ENCODE measurements at regions of chr17 and their contacts with region 1.

Region 1: GRCh38 chr17:19004421-19005136 is at the start of gene FAM83G:
- DNase-seq: peak; percentile 69
- ATAC-seq: peak; percentile 44
- H3K4me3 ChIP-seq: peak within 1 kb of the TSS; percentile 75 to 84 (median 77)
- H3K27ac ChIP-seq: peak within 1 kb of the TSS; percentile 93
- H3K4me1 ChIP-seq: peaks cover 68% of the 10 kb centered on the region
- H3K27me3 ChIP-seq: no peaks in the 10 kb centered on the region; a peak in 1 of 5 replicates
- CTCF ChIP-seq: 0 out of 2 replicates have a peak, but pooled peaks have one; percentile 10
- EP300 ChIP-seq: no peak
- POLR2A ChIP-seq: peak; percentile 5 to 67; a peak in 2 of 4 replicates
- RAD21 ChIP-seq: no peak
- total RNA-seq, gene FAM83G: 14.0 and 18.6 TPM in 2 replicates

Region 2: GRCh38 chr17:18966831-18967624 is 37.6 kb before region 1 on chr17:
- CTCF ChIA-PET with region 1: no interaction called
- POLR2A ChIA-PET with region 1: interaction called, 5 read pairs
- in situ Hi-C with region 1: loop called (anchors 5 kb)
- intact Hi-C with region 1: no loop called
- DNase-seq: no peak
- ATAC-seq: peak; percentile 18
- H3K4me3 ChIP-seq: no peak overlapping the region
- H3K27ac ChIP-seq: no peak overlapping the region
- H3K4me1 ChIP-seq: peaks cover 60% of the 10 kb centered on the region
- H3K27me3 ChIP-seq: 0 out of 5 replicates have a peak, but pooled peaks cover 0 to 8% of the 10 kb centered on the region in 2 experiments
- CTCF ChIP-seq: no peak
- EP300 ChIP-seq: no peak
- POLR2A ChIP-seq: no peak
- RAD21 ChIP-seq: no peak

Region 3: DNA sequence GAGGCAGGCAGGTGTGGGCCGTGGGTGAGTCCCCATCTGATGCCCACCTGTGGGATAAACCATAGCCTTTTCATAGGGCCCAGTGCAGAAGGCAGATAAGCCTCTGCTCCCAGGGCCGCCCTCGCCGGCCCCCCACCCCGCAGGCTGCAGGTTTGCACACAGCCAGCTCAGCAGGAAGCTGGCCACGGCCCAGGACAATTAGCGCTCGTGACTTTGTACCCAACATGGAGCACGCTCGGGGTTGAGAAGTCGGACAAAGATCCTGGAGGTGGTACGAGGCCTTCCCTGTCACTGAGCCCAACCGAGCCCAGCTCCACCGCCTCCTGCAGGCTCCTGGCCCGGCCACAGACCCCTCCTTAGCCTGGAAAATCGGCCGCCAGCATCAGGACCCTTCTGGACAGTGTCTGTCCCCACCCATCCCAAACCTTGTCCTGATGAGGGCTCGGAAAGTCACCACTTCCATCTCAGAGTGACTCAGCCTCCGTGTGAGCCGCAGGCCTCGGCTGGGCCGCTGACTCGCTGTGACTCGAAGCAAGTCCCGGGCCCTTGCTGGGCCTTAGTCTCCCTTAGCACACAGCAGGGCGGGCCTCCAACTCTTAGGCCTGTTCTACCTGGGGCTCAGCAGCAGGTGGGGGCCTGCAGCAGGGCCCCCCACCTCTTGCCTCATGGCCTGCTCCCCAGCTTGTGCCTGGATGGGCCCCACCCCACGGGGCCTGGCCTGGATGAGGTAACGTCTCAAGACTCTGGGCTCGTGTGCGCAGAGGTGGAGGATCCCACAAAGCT is 22.7 kb before region 1 on chr17:
- CTCF ChIA-PET with region 1: no interaction called
- POLR2A ChIA-PET with region 1: interaction called, 22 read pairs
- in situ Hi-C with region 1: no loop called
- intact Hi-C with region 1: no loop called
- DNase-seq: peak; percentile 87
- ATAC-seq: peak; percentile 84
- H3K4me3 ChIP-seq: peak overlapping the region in 1 of 3 experiments; percentile 42; a peak in 1 of 6 replicates
- H3K27ac ChIP-seq: peak overlapping the region; percentile 88
- H3K4me1 ChIP-seq: peaks cover 51% of the 10 kb centered on the region
- H3K27me3 ChIP-seq: no peaks in the 10 kb centered on the region
- CTCF ChIP-seq: peak; percentile 5; the same call in 1 of the 2 replicates
- EP300 ChIP-seq: peak in 1 of 2 experiments; percentile 51; a peak in 2 of 4 replicates
- POLR2A ChIP-seq: peak in 1 of 2 experiments; percentile 64; a peak in 3 of 4 replicates
- RAD21 ChIP-seq: peak; percentile 33; the same call in 1 of the 2 replicates

Region 4: DNA sequence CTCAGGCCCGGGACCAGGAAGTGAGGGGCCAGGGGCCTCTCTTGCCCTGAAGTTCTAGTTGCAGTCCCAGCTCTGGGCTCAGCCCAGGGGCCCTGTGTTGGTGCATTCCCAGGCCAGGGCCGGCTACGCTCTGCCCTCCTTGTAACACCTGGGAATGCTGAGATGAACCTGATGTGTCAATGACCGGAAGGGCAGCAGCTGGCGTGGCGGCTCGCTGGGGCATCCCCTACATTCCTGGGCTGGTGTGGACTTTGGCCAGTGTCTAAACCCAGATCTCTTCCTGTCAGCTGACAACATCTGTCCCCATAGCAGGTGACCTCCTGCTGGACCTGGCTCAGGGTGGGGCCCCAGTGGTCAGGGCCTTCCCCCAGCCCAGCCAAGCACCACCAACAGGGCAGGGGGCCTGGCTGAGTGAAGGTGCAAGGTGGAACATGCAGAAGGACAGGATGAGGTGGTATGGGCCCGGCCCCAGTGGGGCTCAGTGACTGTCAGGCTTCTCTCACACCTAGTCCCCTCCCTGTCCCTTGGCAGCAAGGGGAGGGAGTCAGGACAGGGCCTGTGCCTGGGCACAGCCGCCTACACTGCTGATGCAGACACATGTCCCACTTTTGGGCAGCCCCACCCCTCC is 15.9 kb before region 1 on chr17:
- CTCF ChIA-PET with region 1: no interaction called
- POLR2A ChIA-PET with region 1: interaction called, 27 read pairs
- in situ Hi-C with region 1: no loop called
- intact Hi-C with region 1: loop called (anchors 2 kb)
- DNase-seq: peak; percentile 94
- ATAC-seq: peak; percentile 91
- H3K4me3 ChIP-seq: peak overlapping the region in 1 of 3 experiments; percentile 21; a peak in 1 of 6 replicates
- H3K27ac ChIP-seq: peak overlapping the region; percentile 84
- H3K4me1 ChIP-seq: peaks cover 36% of the 10 kb centered on the region
- H3K27me3 ChIP-seq: no peaks in the 10 kb centered on the region
- CTCF ChIP-seq: peak; percentile 41
- EP300 ChIP-seq: peak; percentile 89 to 92
- POLR2A ChIP-seq: no peak
- RAD21 ChIP-seq: peak; percentile 60

Region 5: DNA sequence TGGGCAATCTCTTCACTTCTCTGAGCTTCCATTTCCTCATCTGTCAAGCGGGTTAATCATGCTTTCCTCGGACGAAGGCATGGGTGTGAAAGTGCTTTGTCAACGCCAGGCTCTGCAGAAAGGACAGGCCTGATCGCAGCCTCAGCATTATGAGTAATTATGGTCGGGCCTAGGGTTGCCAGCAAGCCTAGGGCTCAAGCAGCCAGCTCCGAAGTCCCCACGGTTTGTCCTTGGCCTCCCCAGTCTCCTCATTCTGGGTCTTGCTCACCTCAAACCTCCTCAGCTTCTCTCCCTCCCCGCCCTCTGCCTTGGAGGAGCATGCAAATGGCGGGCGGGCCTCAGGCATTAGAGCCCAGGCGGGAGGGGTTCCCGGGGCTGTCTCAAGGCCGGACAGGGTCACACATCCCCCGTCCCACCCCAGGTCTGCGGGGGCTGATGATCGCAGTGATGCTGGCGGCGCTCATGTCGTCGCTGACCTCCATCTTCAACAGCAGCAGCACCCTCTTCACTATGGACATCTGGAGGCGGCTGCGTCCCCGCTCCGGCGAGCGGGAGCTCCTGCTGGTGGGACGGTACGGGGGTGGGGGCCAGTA is 10.1 kb after region 1 on chr17:
- CTCF ChIA-PET with region 1: no interaction called
- POLR2A ChIA-PET with region 1: interaction called, 11 read pairs
- in situ Hi-C with region 1: no loop called
- intact Hi-C with region 1: no loop called
- DNase-seq: no peak
- ATAC-seq: no peak
- H3K4me3 ChIP-seq: no peak overlapping the region
- H3K27ac ChIP-seq: no peak overlapping the region
- H3K4me1 ChIP-seq: peaks cover 81% of the 10 kb centered on the region
- H3K27me3 ChIP-seq: peaks cover 6 to 32% of the 10 kb centered on the region in 2 experiments; a peak in 3 of 5 replicates
- CTCF ChIP-seq: no peak
- EP300 ChIP-seq: no peak
- POLR2A ChIP-seq: no peak
- RAD21 ChIP-seq: no peak

Region 6: DNA sequence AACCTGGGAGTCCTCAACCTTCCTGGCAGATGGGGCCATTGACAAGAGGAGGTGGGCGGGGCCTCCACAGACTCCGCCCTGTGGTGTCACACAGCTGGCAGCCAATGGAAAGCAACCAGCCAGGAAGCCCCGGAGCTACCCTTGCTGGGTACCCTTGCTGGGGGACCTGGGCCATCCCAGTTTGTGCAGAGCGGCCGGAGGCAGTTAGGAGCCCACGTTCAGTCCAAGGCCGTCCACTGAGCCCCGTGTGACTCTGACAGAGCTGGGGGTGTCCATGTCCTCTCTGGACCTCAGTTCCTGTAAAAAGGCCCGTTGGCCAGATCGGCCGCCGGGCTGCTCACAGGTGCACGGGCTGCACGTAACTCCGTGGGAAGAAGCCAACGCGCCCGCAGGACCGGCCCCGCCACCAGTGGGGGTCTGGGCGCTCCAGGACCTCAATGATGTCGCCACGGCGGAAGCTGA is 17.1 kb after region 1 on chr17:
- CTCF ChIA-PET with region 1: no interaction called
- POLR2A ChIA-PET with region 1: interaction called, 15 read pairs
- in situ Hi-C with region 1: no loop called
- intact Hi-C with region 1: no loop called
- DNase-seq: no peak
- ATAC-seq: no peak
- H3K4me3 ChIP-seq: no peak overlapping the region
- H3K27ac ChIP-seq: no peak overlapping the region
- H3K4me1 ChIP-seq: peaks cover 43% of the 10 kb centered on the region
- H3K27me3 ChIP-seq: peaks cover 3 to 26% of the 10 kb centered on the region in 2 experiments; a peak in 3 of 5 replicates
- CTCF ChIP-seq: no peak
- EP300 ChIP-seq: no peak
- POLR2A ChIP-seq: no peak
- RAD21 ChIP-seq: no peak